ENCODE measurements at regions of chr10 and their contacts with region 1.

Region 1: GRCh38 chr10:48608279-48608681 is 3.4 kb upstream of the ARHGAP22 start:
- DNase-seq: peak; percentile 75

Region 2: GRCh38 chr10:48551861-48552591 is 56.3 kb before region 1 on chr10:
- intact Hi-C with region 1: loop called (anchors 2 kb)
- DNase-seq: peak; percentile 20

Region 3: DNA sequence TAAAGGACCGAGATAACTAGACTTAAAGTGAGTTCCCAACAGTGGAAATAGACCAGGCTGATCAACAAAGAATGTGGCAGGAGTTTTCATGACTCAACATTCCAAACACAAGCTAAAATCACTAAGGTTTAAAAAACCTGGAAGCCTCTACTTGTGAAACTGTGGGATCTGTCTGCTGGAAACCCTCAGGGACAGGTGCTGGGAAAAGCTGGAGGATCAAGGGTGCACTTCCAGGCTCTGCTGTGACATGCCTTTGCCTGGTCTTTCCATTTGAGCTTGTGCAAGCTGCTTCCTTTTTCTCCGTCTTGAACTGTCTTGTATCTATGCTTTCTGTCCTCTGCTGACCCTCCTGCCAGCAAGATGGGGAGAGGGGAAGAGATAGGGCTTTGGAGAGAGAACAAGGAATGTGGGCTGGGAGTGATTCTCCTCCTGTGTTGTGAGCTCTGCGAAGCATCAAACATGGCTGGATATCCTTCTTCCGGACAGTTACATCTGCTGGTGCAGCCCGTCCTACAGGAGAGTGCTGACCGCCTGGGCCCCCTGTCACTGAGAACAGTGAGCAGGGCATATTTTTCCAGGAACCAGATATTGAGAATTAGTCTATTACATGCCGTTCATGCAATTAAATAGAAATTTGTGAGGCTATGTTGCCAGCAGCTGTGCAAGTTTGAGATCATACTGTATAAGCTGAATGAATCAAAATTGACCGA is 28.9 kb before region 1 on chr10:
- intact Hi-C with region 1: loop called (anchors 2 kb)
- DNase-seq: peak; percentile 53

Measured in cardiac septum (tissue), 1 donor.